MCF 10A (cell line): ENCODE measurements at regions of chr19 and their contacts with region 1.

Region 1: DNA sequence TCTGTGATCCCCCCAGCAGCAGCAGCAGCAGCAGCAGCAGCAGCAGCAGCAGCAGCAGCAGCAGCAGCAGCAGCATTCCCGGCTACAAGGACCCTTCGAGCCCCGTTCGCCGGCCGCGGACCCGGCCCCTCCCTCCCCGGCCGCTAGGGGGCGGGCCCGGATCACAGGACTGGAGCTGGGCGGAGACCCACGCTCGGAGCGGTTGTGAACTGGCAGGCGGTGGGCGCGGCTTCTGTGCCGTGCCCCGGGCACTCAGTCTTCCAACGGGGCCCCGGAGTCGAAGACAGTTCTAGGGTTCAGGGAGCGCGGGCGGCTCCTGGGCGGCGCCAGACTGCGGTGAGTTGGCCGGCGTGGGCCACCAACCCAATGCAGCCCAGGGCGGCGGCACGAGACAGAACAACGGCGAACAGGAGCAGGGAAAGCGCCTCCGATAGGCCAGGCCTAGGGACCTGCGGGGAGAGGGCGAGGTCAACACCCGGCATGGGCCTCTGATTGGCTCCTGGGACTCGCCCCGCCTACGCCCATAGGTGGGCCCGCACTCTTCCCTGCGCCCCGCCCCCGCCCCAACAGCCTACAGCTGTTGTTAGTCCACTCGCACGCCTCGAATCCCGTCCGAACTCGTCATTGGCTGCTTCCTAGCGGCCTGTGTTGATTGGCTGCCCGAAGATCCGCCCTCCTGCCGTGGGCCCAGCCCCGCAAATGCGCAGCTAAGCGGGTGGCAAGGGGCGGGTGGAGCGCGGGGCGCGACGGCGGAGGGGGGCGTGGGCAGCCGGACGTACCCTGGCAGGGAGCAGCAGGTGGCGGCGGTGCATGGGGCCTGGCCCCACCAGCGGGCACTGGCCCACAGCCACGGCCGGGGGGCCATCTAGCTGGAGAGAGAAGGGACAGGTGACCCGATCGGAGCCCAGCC is 1.4 kb upstream of the SIX5 start:
- DNase-seq: peak; percentile 99
- H3K4me3 Mint-ChIP-seq: peak overlapping the region; percentile 84
- H3K27ac Mint-ChIP-seq: peak overlapping the region; percentile 82
- H3K4me1 Mint-ChIP-seq: peaks cover 12% of the 10 kb centered on the region
- H3K27me3 Mint-ChIP-seq: no peaks in the 10 kb centered on the region
- CTCF ChIP-seq: peak; percentile 86

Region 2: DNA sequence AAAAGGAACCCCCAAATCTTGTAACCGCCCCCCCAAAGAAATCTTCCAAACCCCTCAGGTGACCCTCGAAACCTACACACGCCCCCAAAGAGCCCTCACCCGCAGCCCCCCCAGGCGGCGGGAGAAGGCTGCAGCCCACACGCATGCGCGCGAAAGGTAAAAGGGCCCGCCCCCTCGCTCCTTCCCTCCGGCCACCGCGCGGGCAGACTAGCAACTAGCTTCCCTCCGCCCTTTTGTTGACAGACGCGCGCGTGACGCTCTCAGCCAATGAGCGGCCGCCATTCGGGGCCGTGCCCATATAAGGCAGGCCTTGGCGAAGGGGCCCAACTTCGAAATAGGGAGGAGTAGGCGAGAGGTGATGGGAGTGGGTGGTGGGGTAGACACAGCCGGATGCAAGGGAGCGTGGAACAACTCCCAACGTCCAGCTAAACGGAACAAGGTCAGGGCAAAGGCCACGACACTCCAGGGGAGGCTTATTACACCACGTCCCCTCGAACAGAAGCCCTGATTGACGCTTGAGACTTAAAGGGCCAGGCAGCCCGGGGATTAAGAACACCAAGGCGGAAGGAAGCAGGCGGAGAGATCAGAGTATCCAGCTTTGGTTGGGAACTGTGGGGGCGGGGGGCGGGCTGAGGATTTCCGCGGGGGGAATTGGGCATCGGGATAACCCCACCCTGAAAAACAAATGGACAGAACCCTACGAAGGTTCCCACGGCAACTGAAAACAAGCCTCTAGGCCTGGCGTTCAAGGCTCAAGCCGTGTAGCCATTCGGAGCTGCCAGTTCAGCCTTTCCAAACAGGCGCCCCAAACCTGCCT is 53.1 kb before region 1 on chr19:
- CTCF ChIA-PET with region 1: interaction called, 7 read pairs
- POLR2A ChIA-PET with region 1: interaction called, 152 read pairs
- intact Hi-C with region 1: loop called (anchors 1 kb)
- DNase-seq: peak; percentile 100
- H3K4me3 Mint-ChIP-seq: peak overlapping the region; percentile 98
- H3K27ac Mint-ChIP-seq: peak overlapping the region; percentile 97
- H3K4me1 Mint-ChIP-seq: peaks cover 18% of the 10 kb centered on the region
- H3K27me3 Mint-ChIP-seq: no peaks in the 10 kb centered on the region
- CTCF ChIP-seq: no peak

Region 3: GRCh38 chr19:45753546-45753945 is 16.9 kb before region 1 on chr19:
- CTCF ChIA-PET with region 1: interaction called, 3 read pairs
- POLR2A ChIA-PET with region 1: interaction called, 58 read pairs
- intact Hi-C with region 1: no loop called
- DNase-seq: no peak
- H3K4me3 Mint-ChIP-seq: no peak overlapping the region
- H3K27ac Mint-ChIP-seq: no peak overlapping the region
- H3K4me1 Mint-ChIP-seq: peaks cover 12% of the 10 kb centered on the region
- H3K27me3 Mint-ChIP-seq: no peaks in the 10 kb centered on the region
- CTCF ChIP-seq: no peak

Region 4: GRCh38 chr19:45792470-45793177 is 22.2 kb after region 1 on chr19 and contains the start of gene DMWD:
- CTCF ChIA-PET with region 1: interaction called, 10 read pairs
- POLR2A ChIA-PET with region 1: interaction called, 30 read pairs
- intact Hi-C with region 1: no loop called
- DNase-seq: peak; percentile 99
- H3K4me3 Mint-ChIP-seq: peak within 1 kb of the TSS; percentile 78
- H3K27ac Mint-ChIP-seq: peak within 1 kb of the TSS; percentile 90
- H3K4me1 Mint-ChIP-seq: peaks cover 28% of the 10 kb centered on the region
- H3K27me3 Mint-ChIP-seq: no peaks in the 10 kb centered on the region
- CTCF ChIP-seq: no peak
- total RNA-seq, gene DMWD: 57.5 and 71.6 TPM in 2 replicates

Region 5: GRCh38 chr19:45876411-45877197 is 106.2 kb after region 1 on chr19:
- CTCF ChIA-PET with region 1: no interaction called
- POLR2A ChIA-PET with region 1: no interaction called
- intact Hi-C with region 1: no loop called
- DNase-seq: no peak
- H3K4me3 Mint-ChIP-seq: no peak overlapping the region
- H3K27ac Mint-ChIP-seq: no peak overlapping the region
- H3K4me1 Mint-ChIP-seq: no peaks in the 10 kb centered on the region
- H3K27me3 Mint-ChIP-seq: peaks cover 46% of the 10 kb centered on the region
- CTCF ChIP-seq: no peak

Region 6: GRCh38 chr19:45886427-45887199 is 116.2 kb after region 1 on chr19:
- CTCF ChIA-PET with region 1: interaction called, 3 read pairs
- POLR2A ChIA-PET with region 1: interaction called, 11 read pairs
- intact Hi-C with region 1: loop called (anchors 2 kb)
- DNase-seq: peak; percentile 97
- H3K4me3 Mint-ChIP-seq: peak overlapping the region; percentile 97
- H3K27ac Mint-ChIP-seq: peak overlapping the region; percentile 98
- H3K4me1 Mint-ChIP-seq: peaks cover 10% of the 10 kb centered on the region
- H3K27me3 Mint-ChIP-seq: no peaks in the 10 kb centered on the region
- CTCF ChIP-seq: no peak

Region 7: DNA sequence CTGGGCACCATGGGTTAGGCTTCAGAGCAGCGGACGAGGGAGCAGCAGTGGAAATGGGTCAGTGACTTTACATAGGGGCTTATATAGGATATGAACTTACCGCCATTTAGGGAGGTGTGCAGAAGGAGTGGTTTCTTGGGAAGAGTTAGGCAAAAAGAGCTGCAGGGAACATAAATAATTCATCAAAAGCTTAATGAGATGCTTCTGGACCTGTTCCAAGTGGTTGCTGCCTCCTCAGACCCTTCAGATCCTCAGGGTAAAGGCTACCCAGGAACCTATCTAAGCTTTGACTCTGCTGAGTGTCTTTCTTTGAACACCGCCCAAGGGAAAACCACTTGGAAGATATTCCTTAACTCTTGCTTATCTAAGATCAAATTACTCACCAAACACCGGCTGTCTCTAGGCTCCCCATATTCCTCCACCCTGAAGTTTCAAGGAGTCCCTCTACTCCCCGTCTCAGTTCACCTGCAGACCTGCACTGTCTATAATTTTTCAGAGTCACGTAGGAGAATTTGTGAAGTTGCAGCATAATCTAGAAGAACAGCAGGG is 270.6 kb after region 1 on chr19 and contains the start of gene IGFL4:
- CTCF ChIA-PET with region 1: no interaction called
- POLR2A ChIA-PET with region 1: no interaction called
- intact Hi-C with region 1: no loop called
- DNase-seq: peak; percentile 51
- H3K4me3 Mint-ChIP-seq: no peak within 1 kb of the TSS
- H3K27ac Mint-ChIP-seq: no peak within 1 kb of the TSS
- H3K4me1 Mint-ChIP-seq: peaks cover 12% of the 10 kb centered on the region
- H3K27me3 Mint-ChIP-seq: peaks cover 46% of the 10 kb centered on the region
- CTCF ChIP-seq: no peak
- total RNA-seq, gene IGFL4: 0.54 TPM in 1 of 2 replicates, not detected in the other